Caco-2 (cell line): ENCODE measurements at regions of chr2 and their contacts with region 1.

Region 1: GRCh38 chr2:135913727-135914365 is 37.6 kb upstream of the MCM6 start:
- DNase-seq: peak in 1 of 2 experiments; percentile 55
- H3K4me3 ChIP-seq: no peak overlapping the region
- H3K4me3 Mint-ChIP-seq: no peak overlapping the region
- H3K27ac Mint-ChIP-seq: no peak overlapping the region
- H3K4me1 ChIP-seq: no peaks in the 10 kb centered on the region
- H3K4me1 Mint-ChIP-seq: no peaks in the 10 kb centered on the region
- H3K27me3 ChIP-seq: no peaks in the 10 kb centered on the region
- H3K27me3 Mint-ChIP-seq: no peaks in the 10 kb centered on the region
- CTCF ChIP-seq: peak; percentile 69 to 75

Region 2: GRCh38 chr2:136117909-136118818 is 204.3 kb after region 1 on chr2 and contains the start of gene CXCR4:
- CTCF ChIA-PET with region 1: no interaction called
- POLR2A ChIA-PET with region 1: no interaction called
- intact Hi-C with region 1: loop called (anchors 5 kb)
- DNase-seq: peak; percentile 67
- H3K4me3 ChIP-seq: peak within 1 kb of the TSS; percentile 55
- H3K4me3 Mint-ChIP-seq: peak within 1 kb of the TSS; percentile 89
- H3K27ac Mint-ChIP-seq: no peak within 1 kb of the TSS
- H3K4me1 ChIP-seq: peaks cover 3% of the 10 kb centered on the region; the same call in 1 of the 2 replicates
- H3K4me1 Mint-ChIP-seq: no peaks in the 10 kb centered on the region
- H3K27me3 ChIP-seq: peaks cover 8% of the 10 kb centered on the region
- H3K27me3 Mint-ChIP-seq: peaks cover 32% of the 10 kb centered on the region
- CTCF ChIP-seq: peak in 1 of 2 experiments; percentile 22
- total RNA-seq, gene CXCR4: 1.00 and 1.4 TPM in 2 replicates

Region 3: GRCh38 chr2:136384531-136385303 is 470.9 kb after region 1 on chr2:
- CTCF ChIA-PET with region 1: interaction called, 8 read pairs
- POLR2A ChIA-PET with region 1: no interaction called
- intact Hi-C with region 1: loop called (anchors 1 kb)
- DNase-seq: peak in 1 of 2 experiments; percentile 24
- H3K4me3 ChIP-seq: no peak overlapping the region
- H3K4me3 Mint-ChIP-seq: no peak overlapping the region
- H3K27ac Mint-ChIP-seq: no peak overlapping the region
- H3K4me1 ChIP-seq: no peaks in the 10 kb centered on the region
- H3K4me1 Mint-ChIP-seq: no peaks in the 10 kb centered on the region
- H3K27me3 ChIP-seq: no peaks in the 10 kb centered on the region
- H3K27me3 Mint-ChIP-seq: peaks cover 4% of the 10 kb centered on the region
- CTCF ChIP-seq: peak; percentile 40 to 65